ENCODE measurements at regions of chr2 and their contacts with region 1.

Region 1: DNA sequence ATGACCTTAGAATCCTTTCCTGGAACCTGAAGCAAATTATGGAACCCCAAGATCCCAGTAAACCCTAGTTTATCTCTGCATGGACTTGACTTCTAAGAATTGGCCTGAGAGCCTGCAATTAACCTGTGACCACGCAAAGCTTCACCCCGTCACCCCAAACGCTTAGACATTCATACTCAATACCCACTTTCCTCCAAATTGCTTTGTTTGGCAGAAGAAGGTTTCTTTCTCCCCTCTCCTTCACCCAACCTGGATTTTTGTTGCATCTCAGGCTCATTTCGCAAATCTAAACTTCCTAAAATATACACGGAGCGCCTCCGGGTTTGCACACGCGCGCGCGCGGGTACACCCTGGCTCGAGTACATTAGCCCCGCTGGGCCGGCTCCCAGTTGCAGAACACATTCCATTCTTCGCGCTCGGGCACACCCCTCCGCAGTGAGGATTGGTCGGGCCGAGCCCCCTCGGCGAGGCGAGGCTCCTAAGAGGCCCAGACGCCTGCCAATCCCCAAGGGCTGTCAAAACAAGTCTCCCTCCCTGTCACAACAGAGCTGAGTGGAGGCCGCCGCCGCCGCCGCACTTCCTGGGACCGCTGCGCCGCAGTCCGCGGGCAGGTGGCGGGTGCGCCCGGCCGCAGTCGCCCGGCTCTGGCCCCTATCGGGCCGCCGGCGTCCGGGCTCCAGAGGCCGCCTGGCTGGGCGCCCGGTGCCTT is at the start of gene PLCL1:
- DNase-seq: peak; percentile 91
- H3K4me3 Mint-ChIP-seq: peak within 1 kb of the TSS; percentile 92
- H3K27ac Mint-ChIP-seq: no peak within 1 kb of the TSS
- H3K4me1 Mint-ChIP-seq: peaks cover 17% of the 10 kb centered on the region
- H3K27me3 Mint-ChIP-seq: peaks cover 72% of the 10 kb centered on the region
- CTCF ChIP-seq: no peak
- total RNA-seq, gene PLCL1: 0.07 TPM in 1 of 2 replicates, not detected in the other

Region 2: DNA sequence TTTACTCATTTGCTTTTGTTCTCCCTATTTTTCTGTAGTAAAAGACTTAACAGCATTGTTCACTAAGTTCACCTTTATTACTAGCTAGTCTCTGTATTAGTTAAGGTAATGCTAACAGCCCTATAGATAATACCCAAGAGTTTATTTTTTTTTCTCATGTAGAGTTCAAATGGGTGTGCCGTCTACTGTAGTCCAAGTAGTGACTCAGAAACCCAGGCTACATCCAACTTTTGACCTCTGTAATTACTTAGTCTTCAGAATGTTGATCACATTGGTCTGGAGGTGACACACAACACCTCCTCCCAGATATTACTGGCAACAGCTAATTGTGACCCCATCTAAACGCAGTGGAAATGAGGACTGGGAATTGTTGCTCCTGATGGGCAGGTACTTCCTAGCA is 343.1 kb before region 1 on chr2:
- CTCF ChIA-PET with region 1: no interaction called
- intact Hi-C with region 1: no loop called
- DNase-seq: no peak
- H3K4me3 Mint-ChIP-seq: peak overlapping the region; percentile 56
- H3K27ac Mint-ChIP-seq: peak overlapping the region; percentile 84
- H3K4me1 Mint-ChIP-seq: peaks cover 35% of the 10 kb centered on the region
- H3K27me3 Mint-ChIP-seq: no peaks in the 10 kb centered on the region
- CTCF ChIP-seq: no peak

Region 3: DNA sequence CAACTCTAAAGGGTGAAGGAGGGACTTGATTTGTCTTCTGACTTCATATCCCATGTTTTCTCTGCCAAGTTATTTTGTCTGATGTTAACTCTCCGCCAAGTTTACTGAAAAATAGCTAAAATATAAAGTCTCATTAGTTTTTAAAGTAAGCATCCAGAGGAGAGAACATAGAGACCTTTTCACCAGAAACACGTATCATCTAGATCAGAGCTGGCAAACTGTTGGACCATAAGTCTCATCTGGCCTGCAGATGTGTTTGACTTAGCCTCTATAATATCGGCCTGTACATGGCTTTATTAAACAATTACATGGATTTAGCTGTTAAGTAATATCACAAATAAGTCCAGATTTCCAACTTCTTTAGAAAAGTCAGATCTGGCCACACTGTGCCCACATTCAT is 182.8 kb after region 1 on chr2:
- CTCF ChIA-PET with region 1: no interaction called
- intact Hi-C with region 1: loop called (anchors 10 kb)
- DNase-seq: no peak
- H3K4me3 Mint-ChIP-seq: no peak overlapping the region
- H3K27ac Mint-ChIP-seq: no peak overlapping the region
- H3K4me1 Mint-ChIP-seq: no peaks in the 10 kb centered on the region
- H3K27me3 Mint-ChIP-seq: no peaks in the 10 kb centered on the region
- CTCF ChIP-seq: no peak

Region 4: GRCh38 chr2:198053776-198054698 is 249.8 kb after region 1 on chr2:
- CTCF ChIA-PET with region 1: no interaction called
- intact Hi-C with region 1: loop called (anchors 5 kb)
- DNase-seq: peak; percentile 20
- H3K4me3 Mint-ChIP-seq: no peak overlapping the region
- H3K27ac Mint-ChIP-seq: no peak overlapping the region
- H3K4me1 Mint-ChIP-seq: no peaks in the 10 kb centered on the region
- H3K27me3 Mint-ChIP-seq: no peaks in the 10 kb centered on the region
- CTCF ChIP-seq: peak; percentile 44

Region 5: GRCh38 chr2:198127627-198128026 is 323.4 kb after region 1 on chr2:
- CTCF ChIA-PET with region 1: interaction called, 5 read pairs
- intact Hi-C with region 1: loop called (anchors 1 kb)
- DNase-seq: peak; percentile 46
- H3K4me3 Mint-ChIP-seq: no peak overlapping the region
- H3K27ac Mint-ChIP-seq: no peak overlapping the region
- H3K4me1 Mint-ChIP-seq: no peaks in the 10 kb centered on the region
- H3K27me3 Mint-ChIP-seq: peaks cover 37% of the 10 kb centered on the region
- CTCF ChIP-seq: peak; percentile 45